T-cell (primary cell): ENCODE measurements at regions of chr6 and their contacts with region 1.

Region 1: DNA sequence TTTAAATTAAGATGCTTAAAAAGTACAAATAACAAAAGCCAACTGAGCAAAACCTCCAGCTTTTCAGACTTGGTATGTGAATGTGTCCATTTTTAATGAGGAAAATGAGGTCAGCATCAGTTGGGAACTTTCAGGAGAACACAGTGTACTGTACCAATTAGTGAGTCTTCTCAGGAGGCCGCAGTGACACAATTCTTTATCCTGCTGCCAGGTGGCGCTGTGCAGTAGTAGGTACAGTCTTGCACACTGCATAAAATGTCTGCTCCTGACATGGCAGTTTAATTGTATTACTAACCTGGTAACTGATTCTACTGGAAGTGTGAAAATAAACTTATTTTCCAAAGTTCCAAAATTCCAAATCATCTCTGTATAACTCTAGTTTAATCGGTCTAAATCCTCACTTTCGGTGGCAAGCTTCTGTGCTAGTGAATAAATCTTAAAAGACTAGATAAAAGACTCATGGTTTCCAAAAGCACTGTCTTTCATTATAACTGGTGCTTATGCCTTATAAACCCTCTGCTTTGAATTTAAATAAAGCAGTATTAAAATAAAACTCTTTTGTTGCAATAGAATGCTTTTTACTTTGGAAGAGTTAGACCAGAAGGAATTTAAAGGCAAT is 214.8 kb upstream of the MMS22L start:
- DNase-seq: peak; percentile 3 to 73 (median 30)
- ATAC-seq: peak; percentile 67 to 85 (median 78)
- H3K4me3 ChIP-seq: no peak overlapping the region
- H3K4me3 Mint-ChIP-seq: no peak overlapping the region
- H3K27ac ChIP-seq: no peak overlapping the region
- H3K27ac Mint-ChIP-seq: no peak overlapping the region
- H3K4me1 ChIP-seq: no peaks in the 10 kb centered on the region
- H3K4me1 Mint-ChIP-seq: no peaks in the 10 kb centered on the region
- H3K27me3 ChIP-seq: peaks cover 2 to 6% of the 10 kb centered on the region in 2 experiments
- H3K27me3 Mint-ChIP-seq: peaks cover 11 to 13% of the 10 kb centered on the region in 2 donors

Region 2: GRCh38 chr6:99119109-99120031 is 1621.5 kb after region 1 on chr6:
- CTCF ChIA-PET with region 1: interaction called, 6 to 13 read pairs
- POLR2A ChIA-PET with region 1: no interaction called
- DNase-seq: peak in 7 of 35 experiments; percentile 1 to 48 (median 4)
- ATAC-seq: no peak
- H3K4me3 ChIP-seq: no peak overlapping the region
- H3K4me3 Mint-ChIP-seq: no peak overlapping the region
- H3K27ac ChIP-seq: no peak overlapping the region
- H3K27ac Mint-ChIP-seq: no peak overlapping the region
- H3K4me1 ChIP-seq: no peaks in the 10 kb centered on the region
- H3K4me1 Mint-ChIP-seq: no peaks in the 10 kb centered on the region
- H3K27me3 ChIP-seq: peaks cover 0 to 3% of the 10 kb centered on the region in 2 experiments
- H3K27me3 Mint-ChIP-seq: peaks cover 20 to 42% of the 10 kb centered on the region in 2 donors